HEK293 (cell line): ENCODE measurements at regions of chr1 and their contacts with region 1.

Region 1: GRCh38 chr1:167059045-167059808 is 30.9 kb downstream of the GPA33 start:
- H3K4me3 ChIP-seq: no peak overlapping the region
- H3K27ac ChIP-seq: no peak overlapping the region
- H3K4me1 ChIP-seq: no peaks in the 10 kb centered on the region
- CTCF ChIP-seq: peak; percentile 81

Region 2: DNA sequence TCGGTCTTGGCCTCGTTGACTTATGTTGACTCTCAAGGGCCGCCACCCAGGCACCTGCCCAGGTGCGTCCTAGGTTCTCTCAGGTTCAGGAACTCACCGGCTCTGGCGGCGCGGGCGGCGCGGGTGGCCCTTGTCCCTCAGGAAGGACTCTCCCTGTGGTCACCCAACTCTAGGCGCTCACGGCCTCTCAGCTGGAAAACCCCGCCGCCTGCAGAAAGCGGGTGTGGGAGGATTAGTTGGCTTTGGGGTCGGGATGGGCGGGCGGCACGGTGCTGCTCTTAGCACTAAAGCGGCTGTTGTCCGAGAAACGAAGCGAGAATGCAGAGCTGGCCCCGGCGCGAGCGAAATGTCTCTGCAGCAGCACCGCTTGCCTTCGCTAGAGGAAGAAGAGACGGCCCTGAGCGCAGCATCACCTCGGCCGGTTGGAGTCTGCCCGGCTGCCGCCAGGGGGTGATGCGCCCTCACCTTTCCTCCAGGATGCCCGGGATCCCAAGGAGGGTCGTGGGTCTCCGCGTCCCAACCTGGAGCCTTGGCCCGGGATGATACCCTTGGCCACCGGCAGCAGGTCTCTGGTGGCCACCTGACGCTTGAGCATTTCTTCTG is 175.1 kb before region 1 on chr1:
- CTCF ChIA-PET with region 1: interaction called, 21 read pairs
- POLR2A ChIA-PET with region 1: no interaction called
- H3K4me3 ChIP-seq: no peak overlapping the region
- H3K27ac ChIP-seq: no peak overlapping the region
- H3K4me1 ChIP-seq: no peaks in the 10 kb centered on the region
- CTCF ChIP-seq: no peak

Region 3: DNA sequence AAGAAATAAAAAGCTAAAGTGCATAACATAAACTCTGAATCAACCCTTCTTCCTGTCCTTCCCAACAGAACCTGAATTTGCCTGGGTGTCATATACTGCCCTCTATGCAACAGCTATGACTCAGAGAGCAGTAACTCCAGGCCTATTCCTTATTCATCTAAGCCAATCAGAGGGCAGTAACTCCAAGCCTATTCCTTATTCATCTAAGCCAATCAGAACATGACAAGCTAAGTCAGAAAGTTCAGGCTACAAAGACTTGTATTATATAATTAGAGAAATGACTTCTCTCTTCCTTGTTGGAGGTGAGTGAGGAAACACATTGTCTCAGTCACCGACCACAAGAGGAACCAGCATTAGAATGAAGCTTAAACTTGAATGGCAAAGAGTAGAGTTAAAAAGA is 157.0 kb before region 1 on chr1:
- CTCF ChIA-PET with region 1: interaction called, 702 read pairs
- POLR2A ChIA-PET with region 1: no interaction called
- H3K4me3 ChIP-seq: no peak overlapping the region
- H3K27ac ChIP-seq: no peak overlapping the region
- H3K4me1 ChIP-seq: no peaks in the 10 kb centered on the region
- CTCF ChIP-seq: no peak

Region 4: GRCh38 chr1:166924823-166925541 is 134.2 kb before region 1 on chr1:
- CTCF ChIA-PET with region 1: interaction called, 702 read pairs
- POLR2A ChIA-PET with region 1: no interaction called
- H3K4me3 ChIP-seq: no peak overlapping the region
- H3K27ac ChIP-seq: no peak overlapping the region
- H3K4me1 ChIP-seq: no peaks in the 10 kb centered on the region
- CTCF ChIP-seq: no peak

Region 5: DNA sequence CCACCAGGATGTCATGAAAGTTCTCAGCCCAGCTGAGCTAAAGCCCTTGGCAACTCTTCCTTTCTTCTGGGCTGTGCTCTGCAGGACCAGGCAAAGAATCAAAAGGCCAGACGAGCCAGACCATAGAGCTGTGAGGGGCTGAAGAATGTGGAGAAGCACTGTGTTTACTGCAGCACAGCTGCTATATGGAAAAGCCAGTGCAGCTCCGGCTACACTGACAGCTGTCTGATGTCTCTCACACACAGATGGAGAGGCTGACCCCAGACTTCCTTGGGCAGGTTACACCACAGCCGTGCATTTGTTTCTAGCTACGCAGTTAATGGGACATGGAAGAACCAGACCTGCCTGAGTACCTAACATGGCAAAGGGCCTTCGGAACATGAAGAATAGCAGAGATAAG is 418.8 kb after region 1 on chr1:
- CTCF ChIA-PET with region 1: no interaction called
- POLR2A ChIA-PET with region 1: no interaction called
- H3K4me3 ChIP-seq: no peak overlapping the region
- H3K27ac ChIP-seq: no peak overlapping the region
- H3K4me1 ChIP-seq: no peaks in the 10 kb centered on the region
- CTCF ChIP-seq: no peak

Region 6: DNA sequence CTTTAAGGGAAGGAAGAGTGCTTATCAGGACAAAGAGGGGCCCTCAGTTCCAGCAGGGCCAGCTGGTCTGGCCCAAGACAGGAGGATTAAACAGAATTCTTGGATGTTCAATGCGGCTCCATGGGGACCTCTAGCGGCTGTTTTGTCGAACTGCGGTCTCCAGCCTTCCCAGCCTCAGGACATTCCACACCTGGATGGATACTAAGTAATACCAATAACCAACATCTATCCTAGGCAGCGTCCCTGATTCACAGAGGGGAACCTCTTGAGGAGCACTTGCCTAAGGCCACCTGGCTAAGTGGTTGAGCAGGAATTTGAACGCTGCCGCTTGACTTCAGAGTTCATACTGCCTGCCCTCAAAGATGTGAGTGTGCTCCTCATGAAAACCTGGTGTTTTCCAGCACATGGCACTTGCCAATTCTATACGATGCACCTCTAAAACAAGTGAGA is 474.6 kb after region 1 on chr1:
- CTCF ChIA-PET with region 1: interaction called, 11 read pairs
- POLR2A ChIA-PET with region 1: no interaction called
- H3K4me3 ChIP-seq: no peak overlapping the region
- H3K27ac ChIP-seq: no peak overlapping the region
- H3K4me1 ChIP-seq: no peaks in the 10 kb centered on the region
- CTCF ChIP-seq: peak; percentile 75